CD4-positive, alpha-beta memory T cell (primary cell): ENCODE measurements at regions of chr16 and their contacts with region 1.

Region 1: GRCh38 chr16:88650749-88651275 is at the start of gene CYBA:
- DNase-seq: peak; percentile 81 to 87 (median 84)
- H3K4me3 ChIP-seq: peak within 1 kb of the TSS; percentile 76 to 91
- H3K4me3 Mint-ChIP-seq: peak within 1 kb of the TSS; percentile 89 to 93 (median 91)
- H3K27ac ChIP-seq: peak within 1 kb of the TSS; percentile 91
- H3K27ac Mint-ChIP-seq: peak within 1 kb of the TSS; percentile 93 to 97 (median 95)
- H3K4me1 ChIP-seq: peaks cover 28% of the 10 kb centered on the region
- H3K4me1 Mint-ChIP-seq: peaks cover 7 to 26% (median 12%) of the 10 kb centered on the region in 4 donors
- H3K27me3 ChIP-seq: no peaks in the 10 kb centered on the region
- H3K27me3 Mint-ChIP-seq: no peaks in the 10 kb centered on the region
- total RNA-seq, gene CYBA: 383 to 386 TPM

Region 2: GRCh38 chr16:88633684-88634140 is 17.1 kb before region 1 on chr16:
- CTCF ChIA-PET with region 1: interaction called, 3 read pairs
- POLR2A ChIA-PET with region 1: interaction called, 35 read pairs
- intact Hi-C with region 1: loop called (anchors 2 kb)
- DNase-seq: peak; percentile 52 to 77 (median 68)
- H3K4me3 ChIP-seq: peak overlapping the region in 1 of 2 donors; percentile 53
- H3K4me3 Mint-ChIP-seq: peak overlapping the region; percentile 69 to 85 (median 78)
- H3K27ac ChIP-seq: peak overlapping the region; percentile 62
- H3K27ac Mint-ChIP-seq: peak overlapping the region; percentile 66 to 93 (median 79)
- H3K4me1 ChIP-seq: peaks cover 42% of the 10 kb centered on the region
- H3K4me1 Mint-ChIP-seq: peaks cover 14 to 44% (median 28%) of the 10 kb centered on the region in 4 donors
- H3K27me3 ChIP-seq: peaks cover 2% of the 10 kb centered on the region
- H3K27me3 Mint-ChIP-seq: peaks cover 0 to 6% of the 10 kb centered on the region in 2 donors

Region 3: GRCh38 chr16:88639231-88640038 is 11.4 kb before region 1 on chr16:
- CTCF ChIA-PET with region 1: no interaction called
- POLR2A ChIA-PET with region 1: interaction called, 35 read pairs
- intact Hi-C with region 1: loop called (anchors 2 kb)
- DNase-seq: no peak
- H3K4me3 ChIP-seq: no peak overlapping the region
- H3K4me3 Mint-ChIP-seq: peak overlapping the region in 2 of 8 donors; percentile 58 to 63
- H3K27ac ChIP-seq: no peak overlapping the region
- H3K27ac Mint-ChIP-seq: peak overlapping the region in 2 of 7 donors; percentile 84 to 92
- H3K4me1 ChIP-seq: peaks cover 50% of the 10 kb centered on the region
- H3K4me1 Mint-ChIP-seq: peaks cover 15 to 48% (median 32%) of the 10 kb centered on the region in 4 donors
- H3K27me3 ChIP-seq: peaks cover 11% of the 10 kb centered on the region
- H3K27me3 Mint-ChIP-seq: peaks cover 0 to 9% of the 10 kb centered on the region in 2 donors

Region 4: GRCh38 chr16:88662843-88663606 is 12.2 kb after region 1 on chr16 and contains the start of gene MVD:
- CTCF ChIA-PET with region 1: no interaction called
- POLR2A ChIA-PET with region 1: interaction called, 13 read pairs
- intact Hi-C with region 1: loop called (anchors 1 kb)
- DNase-seq: peak; percentile 93 to 96 (median 95)
- H3K4me3 ChIP-seq: peak within 1 kb of the TSS; percentile 65 to 95
- H3K4me3 Mint-ChIP-seq: peak within 1 kb of the TSS; percentile 91 to 95 (median 94)
- H3K27ac ChIP-seq: peak within 1 kb of the TSS; percentile 83
- H3K27ac Mint-ChIP-seq: peak within 1 kb of the TSS; percentile 80 to 98 (median 97)
- H3K4me1 ChIP-seq: peaks cover 16% of the 10 kb centered on the region
- H3K4me1 Mint-ChIP-seq: peaks cover 11 to 22% (median 15%) of the 10 kb centered on the region in 4 donors
- H3K27me3 ChIP-seq: no peaks in the 10 kb centered on the region
- H3K27me3 Mint-ChIP-seq: no peaks in the 10 kb centered on the region
- total RNA-seq, gene MVD: 49.2 to 57.0 TPM